ENCODE measurements at regions of chr14 and their contacts with region 1.

Region 1: DNA sequence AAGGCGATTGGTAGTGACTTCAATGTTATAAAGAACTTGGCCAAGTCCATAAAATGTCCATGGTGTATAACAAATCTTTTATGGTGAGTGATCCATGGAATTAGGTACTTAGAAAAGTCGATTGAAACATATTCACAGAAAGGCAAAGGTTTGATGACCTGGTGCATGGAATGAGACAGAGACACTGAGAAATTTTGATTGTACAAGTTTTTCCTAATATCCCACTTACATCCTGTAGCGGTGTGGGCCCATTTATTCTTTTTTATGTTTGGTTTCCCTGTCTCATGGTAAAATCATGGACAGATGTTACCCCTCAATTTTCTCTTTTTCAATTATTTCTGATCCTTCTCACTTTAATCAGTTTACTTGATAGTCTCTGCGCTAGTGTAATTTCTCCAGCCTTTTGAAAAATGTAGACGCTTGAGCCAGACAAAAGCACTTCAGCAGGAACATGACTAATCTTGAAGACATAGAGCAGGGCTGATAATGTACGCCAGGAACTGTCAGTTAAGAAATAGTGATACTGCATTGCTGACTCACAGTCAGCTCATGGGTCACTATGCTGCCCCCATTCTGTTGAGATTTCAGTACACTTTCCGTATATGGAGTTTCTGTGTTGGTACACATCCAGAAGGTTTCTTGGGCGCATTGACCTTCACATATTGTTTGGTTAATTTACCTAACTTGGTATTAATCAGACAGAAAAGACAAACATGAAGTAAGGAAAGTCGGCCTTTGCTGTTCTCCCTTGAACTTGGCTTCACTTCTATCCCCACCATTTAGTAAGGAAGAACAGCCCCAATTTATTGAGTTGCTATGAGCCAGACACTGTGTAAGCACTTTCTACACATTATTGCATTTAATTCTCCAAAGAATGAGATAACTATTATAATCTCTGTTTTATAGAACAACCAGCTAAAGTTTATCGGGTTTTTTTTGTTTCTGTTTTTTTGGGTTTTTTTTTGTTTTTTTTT is 841.7 kb downstream of the DIO2 start:
- DNase-seq: no peak
- H3K4me3 ChIP-seq: no peak overlapping the region
- H3K27ac ChIP-seq: no peak overlapping the region
- H3K4me1 ChIP-seq: no peaks in the 10 kb centered on the region
- H3K27me3 ChIP-seq: no peaks in the 10 kb centered on the region
- CTCF ChIP-seq: no peak
- POLR2A ChIP-seq: no peak

Region 2: GRCh38 chr14:79351011-79351410 is 18.6 kb before region 1 on chr14:
- intact Hi-C with region 1: loop called (anchors 2 kb)
- DNase-seq: no peak
- H3K4me3 ChIP-seq: no peak overlapping the region
- H3K27ac ChIP-seq: no peak overlapping the region
- H3K4me1 ChIP-seq: no peaks in the 10 kb centered on the region
- H3K27me3 ChIP-seq: no peaks in the 10 kb centered on the region
- CTCF ChIP-seq: no peak
- POLR2A ChIP-seq: no peak

Region 3: DNA sequence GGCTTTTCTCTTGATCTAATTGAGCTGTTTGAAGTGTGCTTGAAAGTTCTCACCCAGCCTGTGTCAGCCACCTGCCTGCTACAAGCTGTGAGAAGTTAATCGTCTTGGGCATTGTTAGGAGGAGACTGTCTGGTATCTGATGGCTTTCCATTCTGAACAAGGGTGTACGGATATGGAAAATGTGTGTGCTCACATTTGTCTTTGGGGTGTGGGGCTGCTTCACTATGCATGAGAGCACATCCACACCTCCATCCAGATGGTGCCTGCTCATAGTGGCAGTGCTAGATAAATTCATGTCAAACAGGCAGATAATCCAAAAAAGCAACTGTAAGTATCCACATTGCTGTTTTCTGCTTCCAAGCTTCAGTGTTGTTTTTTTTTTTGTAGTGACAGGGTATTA is 379.4 kb after region 1 on chr14:
- intact Hi-C with region 1: no loop called
- DNase-seq: no peak
- H3K4me3 ChIP-seq: no peak overlapping the region
- H3K27ac ChIP-seq: no peak overlapping the region
- H3K4me1 ChIP-seq: no peaks in the 10 kb centered on the region
- H3K27me3 ChIP-seq: no peaks in the 10 kb centered on the region
- CTCF ChIP-seq: no peak
- POLR2A ChIP-seq: no peak

Measured in breast epithelium (tissue), 4 donors.